PC-9 (cell line): ENCODE measurements at regions of chr12 and their contacts with region 1.

Region 1: DNA sequence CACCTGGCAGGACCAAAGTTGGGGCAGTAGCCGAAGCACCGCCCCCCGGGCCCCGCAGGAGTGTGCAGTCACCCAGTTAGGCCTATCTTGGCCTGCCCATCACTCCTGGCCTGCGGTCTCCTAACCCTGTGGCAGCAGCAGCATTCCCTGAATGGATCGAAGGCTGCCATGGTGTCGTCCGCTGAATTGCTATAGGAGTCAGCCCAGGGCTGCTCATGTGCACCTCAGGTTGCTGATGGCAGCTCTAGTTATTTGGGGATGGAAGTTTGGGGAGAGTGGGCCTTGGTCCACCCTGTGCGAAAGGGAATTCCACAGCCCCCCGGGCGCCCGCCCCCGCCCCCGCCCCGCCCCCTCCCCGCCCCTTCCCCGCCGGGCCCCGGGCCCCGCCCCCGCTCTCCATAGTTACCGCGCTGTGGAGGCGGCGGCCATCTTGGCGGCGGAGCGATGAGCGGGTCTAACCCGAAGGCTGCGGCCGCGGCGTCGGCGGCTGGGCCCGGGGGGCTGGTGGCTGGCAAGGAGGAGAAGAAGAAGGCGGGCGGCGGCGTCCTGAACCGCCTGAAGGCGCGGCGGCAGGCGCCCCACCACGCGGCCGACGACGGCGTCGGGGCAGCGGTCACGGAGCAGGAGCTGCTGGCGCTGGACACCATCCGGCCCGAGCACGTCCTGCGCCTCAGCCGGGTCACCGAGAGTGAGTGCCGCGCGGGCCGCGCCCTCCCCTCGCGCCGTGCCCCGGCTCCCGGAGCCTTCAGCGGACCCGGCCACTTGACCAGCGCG is at the start of gene UNC119B:
- DNase-seq: peak in 1 of 2 experiments; percentile 63
- H3K4me3 ChIP-seq: peak within 1 kb of the TSS; percentile 87
- H3K27ac ChIP-seq: no peak within 1 kb of the TSS; the same call in 1 of the 2 replicates
- H3K4me1 ChIP-seq: peaks cover 7% of the 10 kb centered on the region; the same call in 1 of the 2 replicates
- H3K27me3 ChIP-seq: no peaks in the 10 kb centered on the region
- CTCF ChIP-seq: no peak
- total RNA-seq, gene UNC119B: 25.9 and 30.2 TPM in 2 replicates

Region 2: DNA sequence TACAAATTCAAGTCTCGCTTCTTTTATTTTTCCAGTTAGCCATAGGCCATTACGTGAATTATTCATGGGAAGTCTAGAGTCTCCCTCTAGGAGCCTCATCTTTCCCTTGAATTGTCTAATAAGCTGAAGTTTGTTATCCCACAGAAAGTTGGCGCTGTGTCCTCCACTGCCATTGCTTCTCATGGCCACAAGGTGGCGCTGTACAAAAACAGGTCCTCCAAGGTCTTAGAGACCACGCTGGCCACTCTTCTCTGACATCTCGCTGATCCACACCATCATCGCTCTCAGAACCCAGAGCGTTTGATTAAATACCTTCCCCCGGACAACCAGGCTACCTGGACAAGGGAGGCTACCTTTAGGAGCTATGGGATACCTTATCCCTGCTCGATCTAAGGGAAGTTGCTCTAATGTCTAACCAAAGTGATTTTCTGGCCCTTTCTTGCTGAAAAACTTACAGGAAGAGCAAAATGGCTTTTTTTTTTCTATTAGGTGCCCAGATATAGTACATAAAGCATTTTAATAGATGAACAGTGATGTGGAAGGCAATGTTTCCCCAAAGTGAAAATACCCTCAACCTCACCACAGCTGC is 1265.7 kb before region 1 on chr12:
- CTCF ChIA-PET with region 1: no interaction called
- POLR2A ChIA-PET with region 1: no interaction called
- intact Hi-C with region 1: no loop called
- DNase-seq: peak; percentile 21 to 49
- H3K4me3 ChIP-seq: no peak overlapping the region
- H3K27ac ChIP-seq: no peak overlapping the region
- H3K4me1 ChIP-seq: peaks cover 11% of the 10 kb centered on the region; the same call in 1 of the 2 replicates
- H3K27me3 ChIP-seq: peaks cover 5% of the 10 kb centered on the region; the same call in 1 of the 2 replicates
- CTCF ChIP-seq: peak; percentile 92

Region 3: DNA sequence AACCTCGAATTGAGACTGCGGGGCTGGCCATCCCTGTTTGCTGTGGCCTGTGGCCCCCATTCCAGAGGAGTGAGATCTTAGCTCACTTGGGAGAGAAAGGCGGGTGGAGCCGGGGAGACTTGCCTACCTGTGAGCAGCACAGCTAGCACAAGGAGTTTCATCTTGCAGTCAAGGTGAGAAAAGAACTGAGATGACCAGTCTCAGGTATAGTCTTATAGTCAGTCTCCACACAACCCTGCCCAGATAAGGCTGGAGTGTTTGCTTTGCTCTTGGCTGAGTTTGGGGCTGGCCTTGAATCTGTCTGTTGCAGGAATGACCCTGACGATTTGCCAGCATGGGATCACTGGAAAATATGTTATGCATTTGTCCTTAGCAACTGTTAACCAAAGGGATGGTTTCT is 382.6 kb before region 1 on chr12 and contains the start of gene PLA2G1B:
- CTCF ChIA-PET with region 1: no interaction called
- POLR2A ChIA-PET with region 1: no interaction called
- intact Hi-C with region 1: loop called (anchors 2 kb)
- DNase-seq: no peak
- H3K4me3 ChIP-seq: no peak within 1 kb of the TSS
- H3K27ac ChIP-seq: no peak within 1 kb of the TSS
- H3K4me1 ChIP-seq: no peaks in the 10 kb centered on the region
- H3K27me3 ChIP-seq: 0 out of 2 replicates have a peak, but pooled peaks cover 4% of the 10 kb centered on the region
- CTCF ChIP-seq: no peak
- total RNA-seq, gene PLA2G1B: not detected in 2 replicates

Region 4: GRCh38 chr12:120856980-120857379 is 146.8 kb after region 1 on chr12:
- CTCF ChIA-PET with region 1: no interaction called
- POLR2A ChIA-PET with region 1: no interaction called
- intact Hi-C with region 1: loop called (anchors 5 kb)
- DNase-seq: no peak
- H3K4me3 ChIP-seq: no peak overlapping the region
- H3K27ac ChIP-seq: no peak overlapping the region
- H3K4me1 ChIP-seq: no peaks in the 10 kb centered on the region
- H3K27me3 ChIP-seq: no peaks in the 10 kb centered on the region
- CTCF ChIP-seq: 0 out of 2 replicates have a peak, but pooled peaks have one; percentile 35